HEK293 (cell line): ENCODE measurements at regions of chrX and their contacts with region 1.

Region 1: DNA sequence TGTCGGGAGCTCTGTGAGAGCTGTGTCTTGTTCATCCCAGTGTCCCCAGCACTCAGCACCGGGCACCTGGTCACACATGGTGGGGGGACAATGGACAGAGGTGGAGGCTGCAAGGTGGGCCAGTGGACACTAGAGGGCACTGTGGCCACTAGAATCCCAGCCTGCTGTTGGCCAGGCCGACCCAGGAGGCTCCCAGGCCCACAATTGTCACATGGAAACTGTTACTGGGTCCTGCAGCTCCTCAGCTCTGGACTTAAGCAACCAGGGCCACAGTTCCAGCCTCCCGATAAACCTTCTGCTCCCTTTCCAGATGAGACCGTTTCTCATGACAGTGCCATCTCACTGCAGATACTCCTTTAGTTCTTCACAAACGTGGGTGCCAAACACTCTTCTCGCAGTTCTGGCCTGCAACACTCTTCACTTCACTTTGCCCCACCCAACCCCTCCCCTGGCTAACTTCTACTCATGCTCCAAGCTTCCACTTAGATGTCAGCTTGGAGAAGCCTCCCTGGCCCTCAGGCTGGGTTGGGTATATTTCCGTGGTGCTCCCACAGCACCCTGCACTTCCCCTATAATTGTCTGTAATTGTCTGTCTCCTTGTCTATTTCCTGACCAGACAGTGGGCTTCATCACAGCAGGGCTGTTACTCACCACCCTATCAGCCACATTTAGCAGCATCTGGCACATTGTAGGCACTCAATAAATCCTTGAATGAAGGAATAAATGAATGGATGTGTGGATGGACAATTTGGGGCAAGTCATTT is 3.5 kb upstream of the IQSEC2 start:
- H3K4me3 ChIP-seq: no peak overlapping the region
- H3K27ac ChIP-seq: no peak overlapping the region
- H3K4me1 ChIP-seq: peaks cover 29% of the 10 kb centered on the region
- CTCF ChIP-seq: peak; percentile 90

Region 2: GRCh38 chrX:53211391-53211978 is 73.4 kb before region 1 on chrX:
- CTCF ChIA-PET with region 1: interaction called, 10 read pairs
- POLR2A ChIA-PET with region 1: no interaction called
- H3K4me3 ChIP-seq: no peak overlapping the region
- H3K27ac ChIP-seq: no peak overlapping the region
- H3K4me1 ChIP-seq: no peaks in the 10 kb centered on the region
- CTCF ChIP-seq: no peak

Region 3: DNA sequence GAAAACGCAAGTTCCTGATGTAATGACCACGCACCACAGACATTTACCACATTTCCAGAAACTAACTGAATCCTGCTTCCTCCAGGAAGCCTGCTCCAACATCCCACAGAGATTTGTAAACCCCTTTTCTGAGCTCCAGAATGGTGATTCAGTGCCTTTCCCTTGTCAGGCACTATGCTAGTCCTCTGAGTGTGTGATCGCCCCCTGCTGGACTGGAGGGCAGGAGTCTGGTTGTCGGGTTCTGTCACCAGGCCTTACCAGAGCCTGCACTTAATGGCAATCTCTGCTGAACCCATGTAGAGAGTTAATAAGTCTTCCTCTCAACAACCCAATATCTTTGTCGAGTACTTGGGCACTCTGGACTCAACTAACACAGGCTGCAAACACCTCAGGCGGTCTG is 45.4 kb before region 1 on chrX:
- CTCF ChIA-PET with region 1: interaction called, 13 read pairs
- POLR2A ChIA-PET with region 1: no interaction called
- H3K4me3 ChIP-seq: no peak overlapping the region
- H3K27ac ChIP-seq: no peak overlapping the region
- H3K4me1 ChIP-seq: no peaks in the 10 kb centered on the region
- CTCF ChIP-seq: no peak

Region 4: GRCh38 chrX:53251307-53251706 is 33.6 kb before region 1 on chrX:
- CTCF ChIA-PET with region 1: interaction called, 25 read pairs
- POLR2A ChIA-PET with region 1: no interaction called
- H3K4me3 ChIP-seq: no peak overlapping the region
- H3K27ac ChIP-seq: no peak overlapping the region
- H3K4me1 ChIP-seq: no peaks in the 10 kb centered on the region
- CTCF ChIP-seq: no peak

Region 5: GRCh38 chrX:53269536-53270107 is 15.2 kb before region 1 on chrX:
- CTCF ChIA-PET with region 1: interaction called, 37 read pairs
- POLR2A ChIA-PET with region 1: interaction called, 4 read pairs
- H3K4me3 ChIP-seq: no peak overlapping the region
- H3K27ac ChIP-seq: no peak overlapping the region
- H3K4me1 ChIP-seq: peaks cover 2% of the 10 kb centered on the region; the same call in 1 of the 2 replicates
- CTCF ChIP-seq: no peak

Region 6: GRCh38 chrX:53330331-53330730 is 45.5 kb after region 1 on chrX:
- CTCF ChIA-PET with region 1: interaction called, 16 read pairs
- POLR2A ChIA-PET with region 1: no interaction called
- H3K4me3 ChIP-seq: no peak overlapping the region
- H3K27ac ChIP-seq: no peak overlapping the region
- H3K4me1 ChIP-seq: no peaks in the 10 kb centered on the region
- CTCF ChIP-seq: no peak

Region 7: GRCh38 chrX:53433651-53434639 is 149.1 kb after region 1 on chrX and contains the start of gene HSD17B10:
- CTCF ChIA-PET with region 1: interaction called, 27 read pairs
- POLR2A ChIA-PET with region 1: no interaction called
- H3K4me3 ChIP-seq: peak within 1 kb of the TSS; percentile 63
- H3K27ac ChIP-seq: peak within 1 kb of the TSS; percentile 38; the same call in 1 of the 2 replicates
- H3K4me1 ChIP-seq: no peaks in the 10 kb centered on the region
- CTCF ChIP-seq: no peak